ENCODE measurements at regions of chr1 and their contacts with region 1.

Region 1: DNA sequence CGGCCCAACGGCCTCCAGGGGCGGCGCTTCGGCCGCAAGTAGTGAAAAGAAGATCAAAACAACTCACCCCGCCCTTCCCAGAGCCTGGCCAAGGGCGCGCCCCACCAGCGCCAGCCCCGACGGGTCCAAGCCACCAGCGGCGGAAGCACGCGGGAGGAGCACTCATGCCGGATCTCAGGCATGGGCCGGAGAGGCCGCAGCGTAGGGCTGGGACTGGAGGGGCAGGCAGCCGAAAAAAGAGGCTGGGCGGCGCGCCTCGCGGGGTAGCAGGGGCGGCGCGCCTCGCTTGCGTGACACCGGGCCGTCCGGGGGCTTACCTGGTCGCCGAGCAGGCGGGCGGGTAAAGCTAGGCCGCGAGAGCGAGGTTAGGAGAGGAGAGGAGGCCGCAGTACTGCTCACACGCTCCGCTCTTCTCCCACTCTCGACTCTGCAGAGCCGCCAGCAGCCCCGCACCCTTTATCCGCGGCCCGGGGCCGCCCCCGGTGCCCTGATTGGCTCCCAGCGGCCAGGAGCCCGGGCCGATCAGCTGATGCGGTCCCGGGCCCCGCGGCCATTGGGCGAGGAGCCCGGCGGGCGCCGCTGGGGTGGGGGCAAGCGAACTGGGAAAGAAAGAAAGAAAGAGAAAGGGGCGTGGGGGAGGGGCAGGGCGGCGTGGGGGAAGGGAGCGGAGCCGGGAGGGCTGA is at the start of gene GLUL:
- DNase-seq: peak; percentile 91 to 96
- H3K4me3 ChIP-seq: peak within 1 kb of the TSS; percentile 90 to 92
- H3K27ac ChIP-seq: peak within 1 kb of the TSS; percentile 94 to 98
- H3K4me1 ChIP-seq: peaks cover 4 to 18% of the 10 kb centered on the region in 2 donors
- H3K27me3 ChIP-seq: no peaks in the 10 kb centered on the region
- CTCF ChIP-seq: peak in 1 of 3 experiments; percentile 14
- total RNA-seq, gene GLUL: 1,017 TPM

Region 2: GRCh38 chr1:182029379-182030331 is 361.8 kb before region 1 on chr1:
- intact Hi-C with region 1: loop called (anchors 1 kb)
- DNase-seq: peak; percentile 96 to 99
- H3K4me3 ChIP-seq: peak overlapping the region; percentile 66 to 83
- H3K27ac ChIP-seq: peak overlapping the region; percentile 75 to 76
- H3K4me1 ChIP-seq: no peaks in the 10 kb centered on the region
- H3K27me3 ChIP-seq: no peaks in the 10 kb centered on the region
- CTCF ChIP-seq: peak; percentile 26 to 60 (median 59)

Region 3: GRCh38 chr1:182143154-182143657 is 248.3 kb before region 1 on chr1:
- intact Hi-C with region 1: loop called (anchors 1 kb)
- DNase-seq: peak; percentile 69 to 96
- H3K4me3 ChIP-seq: no peak overlapping the region
- H3K27ac ChIP-seq: peak overlapping the region; percentile 79 to 91
- H3K4me1 ChIP-seq: peaks cover 5 to 27% of the 10 kb centered on the region in 2 donors
- H3K27me3 ChIP-seq: no peaks in the 10 kb centered on the region
- CTCF ChIP-seq: peak; percentile 81 to 94 (median 87)

Region 4: DNA sequence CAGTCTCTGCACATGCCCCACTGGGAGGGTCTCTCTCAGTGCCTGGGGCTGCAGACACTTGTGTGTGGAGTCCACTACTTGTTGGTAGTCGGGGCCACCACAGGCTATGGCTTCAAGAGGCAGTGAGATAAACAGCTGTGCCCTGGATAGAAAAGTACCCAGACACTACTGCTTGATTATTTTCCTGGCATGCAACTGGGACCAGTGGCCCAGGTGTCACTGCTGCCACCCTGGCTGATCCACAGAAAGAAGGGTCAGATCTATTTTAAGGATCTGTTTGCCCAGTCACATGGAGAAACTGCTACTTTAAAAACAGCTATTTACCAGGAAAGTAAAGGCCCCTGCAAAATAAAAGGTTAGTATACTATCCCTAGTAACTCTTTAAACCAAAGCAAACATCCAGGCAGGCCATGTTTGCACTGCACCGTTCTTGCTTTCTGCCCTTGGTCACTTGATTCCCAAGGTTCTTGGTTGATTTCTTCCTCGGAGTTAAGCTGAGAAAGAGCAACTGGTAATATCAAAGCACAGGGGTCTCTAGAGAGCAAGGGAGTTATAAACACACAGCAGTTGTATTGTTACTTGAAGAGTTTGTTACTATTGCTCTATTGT is 99.8 kb before region 1 on chr1:
- intact Hi-C with region 1: loop called (anchors 2 kb)
- DNase-seq: no peak
- H3K4me3 ChIP-seq: no peak overlapping the region
- H3K27ac ChIP-seq: no peak overlapping the region
- H3K4me1 ChIP-seq: peaks cover 0 to 21% of the 10 kb centered on the region in 2 donors
- H3K27me3 ChIP-seq: no peaks in the 10 kb centered on the region
- CTCF ChIP-seq: no peak

Region 5: GRCh38 chr1:182614796-182615454 is 223.4 kb after region 1 on chr1:
- intact Hi-C with region 1: no loop called
- DNase-seq: peak; percentile 73 to 93
- H3K4me3 ChIP-seq: peak overlapping the region; percentile 55 to 61
- H3K27ac ChIP-seq: peak overlapping the region; percentile 93 to 96
- H3K4me1 ChIP-seq: peaks cover 23 to 36% of the 10 kb centered on the region in 2 donors
- H3K27me3 ChIP-seq: no peaks in the 10 kb centered on the region
- CTCF ChIP-seq: no peak

Region 6: DNA sequence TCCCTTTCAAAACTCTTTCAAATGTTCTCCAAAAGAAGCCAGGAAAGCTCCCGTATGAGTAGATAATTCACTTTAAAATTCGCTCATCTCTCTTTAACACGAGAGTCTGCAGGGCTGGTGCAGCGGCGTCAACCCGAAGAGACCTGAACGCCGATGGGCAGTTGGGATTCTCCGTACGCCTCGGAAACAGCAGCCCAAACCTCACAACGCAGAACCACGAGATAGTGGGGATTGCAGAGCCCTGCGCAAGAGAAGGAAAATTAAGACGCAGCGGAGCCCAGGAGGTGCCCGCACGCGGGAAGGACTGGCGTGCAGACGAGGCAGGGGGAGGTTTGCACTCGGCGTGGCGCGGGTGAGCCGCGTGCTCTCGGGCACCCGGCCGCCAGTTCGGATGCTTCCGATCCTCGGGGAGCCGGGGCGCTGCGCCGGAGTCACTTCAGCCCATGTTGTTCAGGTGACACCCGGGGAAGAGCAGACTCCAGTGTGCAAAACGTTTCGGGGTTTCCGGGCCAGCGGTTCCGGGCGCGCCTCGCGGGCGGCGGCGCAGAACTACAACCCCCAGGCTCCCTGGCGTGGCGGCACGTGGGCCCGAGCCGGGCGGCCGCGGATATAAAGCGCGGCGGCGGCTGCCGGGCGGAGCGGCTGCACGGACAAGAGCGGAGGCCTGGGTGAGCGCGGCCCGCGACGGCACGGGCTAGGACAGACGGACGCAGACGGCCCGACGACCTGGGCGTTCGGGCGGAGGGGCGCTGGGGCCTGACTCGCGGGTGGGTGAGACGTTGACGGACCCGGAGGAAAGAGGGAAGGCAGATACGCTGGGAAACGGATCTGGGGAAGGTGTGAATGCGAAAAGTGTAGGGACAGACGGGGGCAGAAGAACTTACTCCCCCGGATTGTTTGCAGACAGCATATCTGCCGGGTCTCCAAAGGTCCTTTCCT is 397.9 kb after region 1 on chr1 and contains the start of gene NPL:
- intact Hi-C with region 1: loop called (anchors 5 kb)
- DNase-seq: peak; percentile 36 to 90
- H3K4me3 ChIP-seq: peak within 1 kb of the TSS; percentile 61 to 62
- H3K27ac ChIP-seq: peak within 1 kb of the TSS; percentile 16 to 48
- H3K4me1 ChIP-seq: peaks cover 0 to 3% of the 10 kb centered on the region in 2 donors
- H3K27me3 ChIP-seq: no peaks in the 10 kb centered on the region
- CTCF ChIP-seq: no peak
- total RNA-seq, gene NPL: 2.1 TPM